SK-N-SH (cell line): ENCODE measurements at regions of chr17 and their contacts with region 1.

Region 1: GRCh38 chr17:78289802-78290363 is 58.5 kb downstream of the TMEM235 start:
- DNase-seq: peak; percentile 89
- H3K4me3 ChIP-seq: no peak overlapping the region
- H3K27ac ChIP-seq: no peak overlapping the region
- H3K4me1 ChIP-seq: peaks cover 0 to 7% of the 10 kb centered on the region in 2 experiments; a peak in 1 of 4 replicates
- H3K27me3 ChIP-seq: no peaks in the 10 kb centered on the region
- CTCF ChIP-seq: peak; percentile 98
- EP300 ChIP-seq: no peak
- RAD21 ChIP-seq: peak; percentile 96

Region 2: GRCh38 chr17:78272181-78272913 is 17.5 kb before region 1 on chr17:
- CTCF ChIA-PET with region 1: interaction called, 19 read pairs
- POLR2A ChIA-PET with region 1: no interaction called
- DNase-seq: peak; percentile 15
- H3K4me3 ChIP-seq: no peak overlapping the region
- H3K27ac ChIP-seq: no peak overlapping the region; a peak in 1 of 4 replicates
- H3K4me1 ChIP-seq: peaks cover 0 to 54% of the 10 kb centered on the region in 2 experiments; a peak in 2 of 4 replicates
- H3K27me3 ChIP-seq: peaks cover 16% of the 10 kb centered on the region
- CTCF ChIP-seq: no peak
- EP300 ChIP-seq: no peak
- RAD21 ChIP-seq: no peak

Region 3: DNA sequence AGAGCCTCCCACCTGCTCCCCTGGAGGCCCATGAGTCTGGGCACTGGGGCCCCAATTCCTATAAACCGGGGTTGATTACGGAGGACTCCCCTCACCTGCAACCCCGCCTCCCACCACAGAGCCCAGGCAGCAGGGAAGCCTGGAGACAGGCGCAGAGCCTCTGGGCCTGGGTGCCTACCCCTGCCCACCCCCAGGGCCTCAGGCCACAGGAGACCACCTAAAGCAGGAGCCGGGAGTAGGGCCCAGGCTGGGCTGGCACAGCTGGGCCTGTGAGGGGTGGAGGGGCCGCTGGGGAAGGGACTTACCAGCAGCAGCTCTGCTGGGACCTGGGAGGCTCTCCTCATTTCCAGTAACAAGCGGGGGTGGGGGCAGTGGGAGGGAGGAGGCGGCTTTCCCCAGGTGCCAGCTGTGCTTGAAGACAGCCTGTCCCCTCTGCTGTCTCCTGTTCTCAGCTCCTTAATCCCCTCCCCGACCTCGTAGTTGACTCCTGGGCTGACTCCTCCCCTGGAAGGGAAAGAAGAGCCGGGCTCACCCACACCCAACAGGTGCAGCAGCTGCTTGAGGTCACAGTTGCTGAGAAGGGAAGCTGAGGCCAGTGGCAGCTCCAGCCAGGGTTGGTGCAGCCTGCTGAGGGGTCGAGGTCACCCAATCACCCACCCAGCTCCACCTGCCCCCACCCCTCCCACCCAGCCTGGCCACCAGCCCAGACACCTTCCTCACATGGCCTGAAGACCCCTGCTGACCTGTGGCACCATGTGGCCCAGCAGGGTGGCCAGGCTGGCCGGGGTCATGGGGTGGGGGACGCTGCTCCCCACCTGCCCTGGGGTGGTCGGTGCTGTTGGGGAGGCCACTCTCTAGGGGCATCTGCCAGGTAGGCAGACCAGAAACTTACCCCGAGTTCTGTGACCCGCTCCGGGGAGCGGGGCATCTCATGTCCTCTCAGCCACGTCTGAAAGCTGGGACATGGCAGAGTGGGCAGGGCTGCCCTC is 11.4 kb before region 1 on chr17:
- CTCF ChIA-PET with region 1: interaction called, 14 read pairs
- POLR2A ChIA-PET with region 1: no interaction called
- DNase-seq: no peak
- H3K4me3 ChIP-seq: no peak overlapping the region
- H3K27ac ChIP-seq: peak overlapping the region in 1 of 2 experiments; percentile 45; a peak in 1 of 4 replicates
- H3K4me1 ChIP-seq: peaks cover 0 to 21% of the 10 kb centered on the region in 2 experiments; a peak in 1 of 4 replicates
- H3K27me3 ChIP-seq: peaks cover 7% of the 10 kb centered on the region
- CTCF ChIP-seq: no peak
- EP300 ChIP-seq: no peak
- RAD21 ChIP-seq: no peak

Region 4: DNA sequence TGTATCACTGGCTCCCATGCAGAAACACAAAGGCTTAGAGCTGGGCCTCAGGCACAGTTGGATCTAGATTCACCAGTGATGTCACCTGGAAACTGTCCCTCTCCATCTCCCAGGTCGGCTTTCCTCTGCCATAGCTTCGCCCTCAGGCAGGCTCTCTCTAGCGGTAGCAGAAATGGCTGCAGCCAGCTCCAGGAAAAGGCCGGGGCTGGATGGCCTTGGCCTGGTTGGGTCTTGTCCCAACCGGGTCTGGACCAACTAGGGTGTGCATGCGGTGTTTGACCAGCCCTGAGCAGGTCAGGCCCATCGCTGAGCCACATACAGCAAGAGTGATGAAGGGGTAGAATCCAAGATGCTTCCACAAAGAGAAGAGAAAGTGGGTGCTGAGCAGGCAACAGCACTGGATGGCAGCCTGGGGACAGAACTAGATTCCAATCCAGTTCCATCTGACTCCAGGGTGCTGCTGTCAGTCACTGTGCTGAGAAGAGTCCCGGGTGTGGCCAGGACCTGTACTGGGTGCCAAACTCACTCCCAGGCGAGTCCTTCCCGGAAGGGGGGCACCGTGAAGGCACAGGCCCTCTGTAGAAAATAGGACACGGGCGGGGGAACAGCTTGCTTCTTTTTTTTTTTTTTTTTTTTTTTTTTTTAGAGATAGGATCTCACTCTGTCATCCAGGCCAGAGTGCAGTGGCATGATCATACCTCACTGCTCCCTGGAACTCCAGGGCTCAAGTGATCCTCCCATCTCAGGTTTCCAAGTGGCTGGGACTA is 18.2 kb after region 1 on chr17:
- CTCF ChIA-PET with region 1: interaction called, 32 read pairs
- POLR2A ChIA-PET with region 1: no interaction called
- DNase-seq: peak; percentile 51
- H3K4me3 ChIP-seq: no peak overlapping the region
- H3K27ac ChIP-seq: no peak overlapping the region
- H3K4me1 ChIP-seq: peaks cover 0 to 7% of the 10 kb centered on the region in 2 experiments; a peak in 1 of 4 replicates
- H3K27me3 ChIP-seq: no peaks in the 10 kb centered on the region
- CTCF ChIP-seq: no peak; the same call in 1 of the 2 replicates
- EP300 ChIP-seq: no peak
- RAD21 ChIP-seq: no peak

Region 5: GRCh38 chr17:78313735-78314648 is 24.1 kb after region 1 on chr17:
- CTCF ChIA-PET with region 1: interaction called, 32 read pairs
- POLR2A ChIA-PET with region 1: no interaction called
- DNase-seq: peak; percentile 95
- H3K4me3 ChIP-seq: peak overlapping the region; percentile 48 to 50
- H3K27ac ChIP-seq: peak overlapping the region; percentile 18 to 99; a peak in 3 of 4 replicates
- H3K4me1 ChIP-seq: peaks cover 21 to 32% of the 10 kb centered on the region in 2 experiments; a peak in 3 of 4 replicates
- H3K27me3 ChIP-seq: no peaks in the 10 kb centered on the region
- CTCF ChIP-seq: 0 out of 2 replicates have a peak, but pooled peaks have one; percentile 8
- EP300 ChIP-seq: no peak
- RAD21 ChIP-seq: no peak

Region 6: DNA sequence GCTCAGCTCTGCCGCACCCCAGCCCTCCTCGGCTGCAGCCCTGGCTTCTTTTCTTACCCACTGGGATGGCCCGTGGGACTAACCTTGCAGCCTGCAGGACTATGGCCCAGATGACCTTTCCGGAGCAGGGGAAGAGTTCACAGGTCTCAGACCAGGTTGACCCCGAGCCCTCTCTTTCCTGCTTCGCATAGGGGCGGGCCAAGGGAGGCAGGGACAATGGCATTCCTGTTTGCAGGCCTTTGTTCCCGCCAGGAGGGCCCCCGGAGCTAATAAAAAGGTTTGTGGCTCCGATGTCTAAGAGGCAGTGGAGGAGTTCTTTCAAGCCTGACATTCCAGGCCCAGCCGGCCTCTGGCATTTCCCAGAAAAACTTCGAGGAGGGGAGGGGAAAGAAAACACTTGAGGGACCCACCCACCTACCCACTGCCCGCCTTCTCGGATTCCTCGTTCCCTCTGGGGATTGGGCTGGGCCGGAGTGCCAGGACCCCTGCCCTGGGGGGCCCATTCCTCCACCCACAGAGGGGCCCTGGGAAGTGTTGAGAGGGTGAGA is 75.8 kb after region 1 on chr17:
- CTCF ChIA-PET with region 1: interaction called, 25 read pairs
- POLR2A ChIA-PET with region 1: no interaction called
- DNase-seq: no peak
- H3K4me3 ChIP-seq: no peak overlapping the region
- H3K27ac ChIP-seq: no peak overlapping the region; a peak in 1 of 4 replicates
- H3K4me1 ChIP-seq: peaks cover 4 to 48% of the 10 kb centered on the region in 2 experiments; a peak in 1 of 4 replicates
- H3K27me3 ChIP-seq: no peaks in the 10 kb centered on the region
- CTCF ChIP-seq: no peak
- EP300 ChIP-seq: no peak
- RAD21 ChIP-seq: no peak